AG04450 (cell line): ENCODE measurements at regions of chr7 and their contacts with region 1.

Region 1: GRCh38 chr7:123705211-123705901 is 43.4 kb downstream of the WASL start:
- DNase-seq: no peak
- H3K4me3 ChIP-seq: no peak overlapping the region
- H3K27ac ChIP-seq: no peak overlapping the region
- H3K27me3 ChIP-seq: no peaks in the 10 kb centered on the region
- CTCF ChIP-seq: no peak

Region 2: DNA sequence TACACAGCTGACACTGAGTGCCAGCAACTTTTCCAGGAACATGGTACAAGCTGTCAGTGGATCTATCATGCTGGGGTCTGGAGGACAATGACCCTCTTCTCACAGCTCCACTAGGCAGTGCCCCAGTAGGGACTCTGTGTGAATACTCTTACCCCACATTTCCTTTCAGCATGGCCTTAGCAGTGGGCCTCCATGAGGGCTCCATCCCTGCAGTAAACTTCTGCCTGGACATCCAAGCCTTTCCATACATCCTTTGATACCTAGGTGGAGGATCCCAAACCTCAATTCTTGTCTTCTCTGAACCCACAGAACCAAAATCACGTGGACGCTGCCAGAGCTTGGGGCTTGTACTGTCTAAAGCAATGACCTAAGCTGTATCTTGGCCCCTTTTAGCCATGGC is 287.8 kb before region 1 on chr7:
- CTCF ChIA-PET with region 1: no interaction called
- POLR2A ChIA-PET with region 1: no interaction called
- DNase-seq: no peak
- H3K4me3 ChIP-seq: no peak overlapping the region
- H3K27ac ChIP-seq: no peak overlapping the region
- H3K27me3 ChIP-seq: no peaks in the 10 kb centered on the region
- CTCF ChIP-seq: no peak

Region 3: GRCh38 chr7:123635551-123636359 is 69.6 kb before region 1 on chr7:
- CTCF ChIA-PET with region 1: interaction called, 10 read pairs
- POLR2A ChIA-PET with region 1: no interaction called
- DNase-seq: no peak
- H3K4me3 ChIP-seq: no peak overlapping the region
- H3K27ac ChIP-seq: no peak overlapping the region
- H3K27me3 ChIP-seq: peaks cover 3% of the 10 kb centered on the region
- CTCF ChIP-seq: peak; percentile 71

Region 4: GRCh38 chr7:123692471-123692877 is 12.9 kb before region 1 on chr7:
- CTCF ChIA-PET with region 1: interaction called, 25 read pairs
- POLR2A ChIA-PET with region 1: no interaction called
- DNase-seq: no peak
- H3K4me3 ChIP-seq: no peak overlapping the region
- H3K27ac ChIP-seq: no peak overlapping the region
- H3K27me3 ChIP-seq: no peaks in the 10 kb centered on the region
- CTCF ChIP-seq: no peak

Region 5: GRCh38 chr7:123727071-123727837 is 21.9 kb after region 1 on chr7:
- CTCF ChIA-PET with region 1: interaction called, 11 read pairs
- POLR2A ChIA-PET with region 1: no interaction called
- DNase-seq: peak; percentile 54
- H3K4me3 ChIP-seq: no peak overlapping the region
- H3K27ac ChIP-seq: no peak overlapping the region
- H3K27me3 ChIP-seq: no peaks in the 10 kb centered on the region
- CTCF ChIP-seq: no peak